ENCODE measurements at regions of chr2 and their contacts with region 1.

Region 1: DNA sequence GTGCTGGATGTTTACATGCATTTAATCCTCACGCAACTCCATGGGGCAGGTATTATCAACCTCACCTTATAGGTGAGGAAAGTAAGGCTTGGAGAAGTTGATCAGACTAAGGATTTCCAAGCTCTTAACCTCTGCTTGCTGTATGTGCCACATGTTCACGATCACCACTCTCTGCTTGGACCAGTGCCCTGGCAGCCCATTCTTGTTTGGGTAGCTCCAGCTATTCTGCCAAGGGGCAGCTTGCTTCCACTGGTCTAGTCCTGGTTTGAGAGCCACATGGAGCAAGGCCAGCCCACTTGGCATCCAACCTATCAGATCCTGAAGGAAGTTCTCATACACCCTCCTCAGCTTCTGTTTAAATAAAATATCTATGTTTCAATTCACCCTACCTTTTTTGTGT is 14.3 kb downstream of the PLB1 start:
- DNase-seq: no peak
- H3K4me3 ChIP-seq: no peak overlapping the region
- H3K27ac ChIP-seq: no peak overlapping the region
- H3K4me1 ChIP-seq: peaks cover 12% of the 10 kb centered on the region
- H3K27me3 ChIP-seq: no peaks in the 10 kb centered on the region
- CTCF ChIP-seq: no peak

Region 2: DNA sequence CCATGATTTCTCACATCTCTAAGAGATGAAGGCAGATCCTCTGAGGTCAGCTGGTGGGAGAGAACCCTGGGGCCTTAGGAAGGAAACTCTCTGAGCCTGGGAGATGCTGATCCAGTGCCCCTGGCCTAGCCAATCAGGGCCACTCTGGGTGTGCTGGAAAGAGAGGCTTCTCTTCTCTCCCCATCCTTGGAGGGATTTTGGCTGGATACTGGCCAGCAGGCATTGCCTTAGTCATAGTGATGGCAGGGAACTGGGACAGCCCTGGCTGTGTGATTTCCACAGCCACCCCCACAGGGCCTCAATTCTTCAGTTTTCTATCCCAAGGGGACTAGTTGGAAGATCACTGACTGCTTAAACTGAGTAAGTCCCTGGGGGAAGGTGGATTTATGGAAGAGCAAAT is 40.9 kb before region 1 on chr2:
- CTCF ChIA-PET with region 1: no interaction called
- dilution Hi-C with region 1: no loop called
- in situ Hi-C with region 1: no loop called
- intact Hi-C with region 1: loop called (anchors 1 kb)
- DNase-seq: no peak
- H3K4me3 ChIP-seq: no peak overlapping the region
- H3K27ac ChIP-seq: no peak overlapping the region
- H3K4me1 ChIP-seq: peaks cover 24% of the 10 kb centered on the region
- H3K27me3 ChIP-seq: no peaks in the 10 kb centered on the region
- CTCF ChIP-seq: no peak

Region 3: DNA sequence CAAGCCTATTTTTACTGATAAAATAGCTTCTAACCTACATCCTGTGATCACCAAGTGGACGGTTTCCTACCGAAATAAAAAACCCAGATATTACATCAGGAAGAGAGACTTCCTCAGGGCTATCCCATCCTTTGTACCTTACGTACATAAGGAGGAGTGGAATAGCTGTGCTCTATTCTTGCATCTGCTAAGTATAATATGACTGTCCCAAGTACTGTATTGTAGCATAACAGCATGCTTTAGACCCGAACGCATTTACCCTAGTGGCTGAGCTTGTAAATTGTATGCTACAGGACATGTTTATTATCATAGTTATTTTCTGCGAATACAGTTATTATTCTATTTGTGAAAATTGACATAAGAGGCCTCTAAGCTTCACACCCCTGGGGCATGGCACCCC is 907.4 kb after region 1 on chr2:
- CTCF ChIA-PET with region 1: no interaction called
- dilution Hi-C with region 1: no loop called
- in situ Hi-C with region 1: no loop called
- intact Hi-C with region 1: no loop called
- DNase-seq: no peak
- H3K4me3 ChIP-seq: no peak overlapping the region
- H3K27ac ChIP-seq: no peak overlapping the region
- H3K4me1 ChIP-seq: no peaks in the 10 kb centered on the region
- H3K27me3 ChIP-seq: no peaks in the 10 kb centered on the region
- CTCF ChIP-seq: no peak